Activated T-helper 1 cell treated with anti-CD3 and anti-CD28 coated beads, Interleukin-12 subunit alpha, Interleukin-12 subunit beta, Interleukin-2, Interleukin-4 antibody, amounts not matched to agents 30 ng/mL and 10 ng/mL and 1 ng/mL, durations not matched to agents 14 hours and 24 hours and 36 hours (primary cell): ENCODE measurements at regions of chr6 and their contacts with region 1.

Region 1: GRCh38 chr6:149746147-149746946 is at the start of gene NUP43:
- DNase-seq: peak; percentile 90
- H3K4me3 Mint-ChIP-seq: peak within 1 kb of the TSS; percentile 99
- H3K27ac Mint-ChIP-seq: peak within 1 kb of the TSS; percentile 87
- H3K4me1 Mint-ChIP-seq: peaks cover 31% of the 10 kb centered on the region
- H3K27me3 Mint-ChIP-seq: no peaks in the 10 kb centered on the region
- total RNA-seq, gene NUP43: 81.3 and 90.5 TPM in 2 replicates

Region 2: DNA sequence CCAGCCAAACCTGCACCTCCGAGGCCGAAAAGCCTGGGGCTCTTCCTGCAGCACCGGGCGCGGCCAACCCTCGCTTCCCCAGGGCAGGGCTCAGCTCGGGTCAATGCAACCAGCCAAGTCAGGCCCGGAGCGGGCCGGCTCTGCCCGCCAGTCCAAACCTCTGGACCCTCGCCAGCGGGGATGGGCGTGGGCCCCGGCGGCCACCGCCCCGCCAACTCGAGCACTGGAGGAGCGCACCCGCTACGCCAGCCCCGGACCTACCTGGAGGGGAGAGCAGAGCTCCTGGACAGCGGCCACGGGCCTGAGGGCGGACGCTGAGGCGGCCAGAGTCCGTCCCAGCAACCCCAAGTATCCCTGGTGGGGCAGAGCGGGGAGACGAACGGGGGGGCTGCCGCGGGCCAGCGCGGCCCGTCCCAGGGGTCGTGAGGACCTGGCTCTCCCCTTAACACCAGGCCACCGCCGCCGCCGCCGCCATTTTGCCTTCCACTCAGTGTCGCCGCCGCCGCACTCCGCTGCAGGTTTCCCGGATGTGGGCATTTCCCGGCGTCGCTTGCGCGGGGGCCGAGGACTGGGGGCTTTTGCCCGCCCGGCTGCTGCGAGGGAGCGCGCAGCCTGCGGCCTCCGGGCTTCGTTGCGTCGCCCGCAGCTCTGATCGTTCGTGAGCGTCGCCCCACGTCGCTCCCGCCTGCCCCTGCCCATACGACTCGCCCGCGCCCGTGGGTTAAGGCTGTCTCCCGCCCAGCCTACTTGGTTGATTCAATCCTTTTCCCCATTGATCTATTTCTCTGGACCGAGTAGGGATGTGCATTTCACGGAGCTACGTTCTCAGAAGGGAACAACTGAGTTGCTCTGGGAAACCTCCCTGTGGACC is 28.5 kb before region 1 on chr6 and contains the start of gene LATS1:
- intact Hi-C with region 1: loop called (anchors 1 kb)
- DNase-seq: peak; percentile 90
- H3K4me3 Mint-ChIP-seq: peak within 1 kb of the TSS; percentile 93
- H3K27ac Mint-ChIP-seq: peak within 1 kb of the TSS; percentile 91
- H3K4me1 Mint-ChIP-seq: peaks cover 31% of the 10 kb centered on the region
- H3K27me3 Mint-ChIP-seq: no peaks in the 10 kb centered on the region
- total RNA-seq, gene LATS1: 33.1 and 34.0 TPM in 2 replicates

Region 3: GRCh38 chr6:149723771-149724417 is 22.5 kb before region 1 on chr6:
- intact Hi-C with region 1: loop called (anchors 1 kb)
- DNase-seq: peak; percentile 17
- H3K4me3 Mint-ChIP-seq: no peak overlapping the region
- H3K27ac Mint-ChIP-seq: no peak overlapping the region
- H3K4me1 Mint-ChIP-seq: peaks cover 23% of the 10 kb centered on the region
- H3K27me3 Mint-ChIP-seq: no peaks in the 10 kb centered on the region